Dorsolateral prefrontal cortex (tissue), 120 donors: ENCODE measurements at regions of chr15 and their contacts with region 1.

Region 1: DNA sequence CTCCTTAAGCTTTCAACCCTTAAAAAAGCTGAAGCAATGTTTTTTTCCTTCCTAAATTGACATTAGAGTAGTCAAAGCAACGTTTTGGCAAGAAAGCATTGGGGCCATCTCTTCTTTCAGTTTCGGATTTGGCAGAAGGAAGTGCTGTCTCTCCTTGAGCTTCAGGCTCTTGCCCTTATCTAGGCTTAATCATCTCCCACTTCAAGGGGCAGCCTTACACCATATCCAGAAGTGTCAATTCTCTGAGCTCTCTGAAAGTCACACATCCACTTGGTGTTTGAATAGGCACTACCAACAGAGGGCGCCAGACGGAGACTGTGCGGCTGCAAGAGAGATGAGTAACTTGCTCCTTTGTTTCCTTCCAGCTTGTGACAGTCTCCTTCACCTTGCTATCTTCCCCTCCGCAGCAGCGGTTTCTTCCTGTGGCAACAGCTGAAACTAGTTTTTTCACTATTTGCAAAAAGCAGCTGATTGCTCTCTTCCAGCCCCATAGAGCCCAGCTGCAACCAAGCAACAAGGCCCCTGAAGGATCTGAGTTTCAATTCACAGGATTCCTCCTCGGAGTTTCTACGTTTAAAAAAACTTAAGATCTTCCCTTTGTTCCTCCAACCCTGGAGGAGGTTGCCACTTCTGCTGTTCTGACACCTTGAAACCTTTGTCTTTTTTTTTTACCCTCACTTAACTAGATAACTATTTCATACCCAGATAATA is 147.0 kb upstream of the SLCO3A1 start:
- DNase-seq: peak; percentile 50 to 88 (median 78)
- H3K4me3 ChIP-seq: peak overlapping the region in 3 of 59 donors; percentile 5 to 18 (median 10)
- H3K27ac ChIP-seq: peak overlapping the region in 49 of 59 donors; percentile 1 to 78 (median 60)
- H3K27me3 ChIP-seq: no peaks in the 10 kb centered on the region
- CTCF ChIP-seq: peak; percentile 62 to 95 (median 89)

Region 2: DNA sequence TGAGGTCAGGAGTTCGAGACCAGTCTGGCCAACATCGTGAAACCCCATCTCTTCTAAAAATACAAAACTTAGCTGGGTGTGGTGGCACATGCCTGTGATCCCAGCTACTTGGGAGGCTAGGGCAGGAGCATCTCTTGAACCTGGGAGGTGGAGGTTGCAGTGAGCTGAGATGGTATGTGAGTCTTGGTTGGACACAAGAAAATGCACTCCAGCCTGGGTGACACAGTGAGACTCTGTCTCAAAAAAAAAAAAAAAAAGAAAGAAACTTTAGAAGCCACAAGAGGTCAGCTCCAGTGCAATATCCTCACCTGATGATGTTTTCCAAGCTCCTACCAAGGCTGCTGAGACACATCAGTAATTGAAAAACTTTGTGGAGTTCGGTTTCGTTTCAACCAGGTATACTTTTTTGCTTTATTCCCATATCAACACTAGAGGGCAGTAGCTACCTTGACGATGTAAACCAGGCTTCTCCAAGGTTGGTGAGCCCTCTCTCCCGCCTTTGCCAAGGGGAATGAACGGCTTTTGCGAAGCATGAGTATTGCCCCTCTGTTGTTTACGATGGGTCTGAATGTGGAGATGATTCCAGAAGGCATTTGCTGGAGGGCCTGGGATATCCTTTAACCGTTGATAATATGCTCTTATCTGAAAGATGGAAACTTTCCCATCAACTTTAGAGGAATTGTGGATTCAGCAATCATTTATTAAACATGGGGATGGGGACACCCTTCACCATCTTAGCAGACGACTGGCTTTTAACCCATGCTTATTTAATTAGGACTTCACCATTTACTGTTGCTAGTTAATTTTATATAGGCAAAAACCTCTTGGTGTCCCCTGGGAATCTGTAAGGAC is 403.7 kb before region 1 on chr15:
- intact Hi-C with region 1: loop called in 1 of 2 experiments (anchors 5 kb)
- DNase-seq: peak in 4 of 10 donors; percentile 21 to 46 (median 34)
- H3K4me3 ChIP-seq: peak overlapping the region in 13 of 59 donors; percentile 1 to 43 (median 20)
- H3K27ac ChIP-seq: no peak overlapping the region
- H3K27me3 ChIP-seq: peaks cover 0 to 10% (median 0%) of the 10 kb centered on the region in 45 donors
- CTCF ChIP-seq: peak; percentile 51 to 90 (median 78)

Region 3: GRCh38 chr15:91529534-91529933 is 176.9 kb before region 1 on chr15:
- intact Hi-C with region 1: loop called in 1 of 2 experiments (anchors 5 kb)
- DNase-seq: no peak
- H3K4me3 ChIP-seq: no peak overlapping the region
- H3K27ac ChIP-seq: no peak overlapping the region
- H3K27me3 ChIP-seq: no peaks in the 10 kb centered on the region
- CTCF ChIP-seq: no peak

Region 4: GRCh38 chr15:91561371-91562100 is 144.9 kb before region 1 on chr15:
- intact Hi-C with region 1: loop called in 1 of 2 experiments (anchors 5 kb)
- DNase-seq: no peak
- H3K4me3 ChIP-seq: peak overlapping the region in 4 of 59 donors; percentile 9 to 25 (median 15)
- H3K27ac ChIP-seq: peak overlapping the region in 58 of 59 donors; percentile 82 to 100 (median 97)
- H3K27me3 ChIP-seq: no peaks in the 10 kb centered on the region
- CTCF ChIP-seq: peak in 2 of 56 donors; percentile 15 to 16

Region 5: GRCh38 chr15:91921188-91921842 is 214.8 kb after region 1 on chr15:
- intact Hi-C with region 1: no loop called
- DNase-seq: no peak
- H3K4me3 ChIP-seq: peak overlapping the region in 1 of 59 donors; percentile 6
- H3K27ac ChIP-seq: peak overlapping the region in 9 of 59 donors; percentile 2 to 64 (median 28)
- H3K27me3 ChIP-seq: no peaks in the 10 kb centered on the region
- CTCF ChIP-seq: no peak

Region 6: GRCh38 chr15:91956026-91956723 is 249.7 kb after region 1 on chr15:
- intact Hi-C with region 1: loop called in 1 of 2 experiments (anchors 10 kb)
- DNase-seq: no peak
- H3K4me3 ChIP-seq: no peak overlapping the region
- H3K27ac ChIP-seq: peak overlapping the region in 44 of 59 donors; percentile 1 to 71 (median 54)
- H3K27me3 ChIP-seq: no peaks in the 10 kb centered on the region
- CTCF ChIP-seq: no peak